ENCODE measurements at regions of chr18 and their contacts with region 1.

Region 1: DNA sequence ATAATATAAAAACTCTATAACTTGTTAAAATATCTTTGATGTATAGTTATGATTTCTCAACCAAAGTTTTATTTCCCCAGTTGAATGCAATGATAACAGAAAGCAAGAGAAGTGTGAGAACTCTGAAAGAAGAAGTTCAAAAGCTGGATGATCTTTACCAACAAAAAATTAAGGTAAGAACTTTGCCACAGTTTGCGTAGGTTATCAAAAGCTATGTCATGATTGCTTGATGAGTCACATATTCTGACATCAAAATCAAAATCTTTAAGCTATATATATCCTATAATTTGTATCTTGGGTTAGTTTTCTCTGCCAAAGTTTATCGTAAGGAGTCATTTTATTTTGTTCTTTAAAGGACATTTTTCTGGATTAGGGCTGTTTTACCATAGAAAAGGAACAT is 35.0 kb downstream of the NDC80 start:
- DNase-seq: peak in 1 of 35 experiments; percentile 55
- ATAC-seq: peak in 2 of 4 experiments; percentile 33 to 79
- H3K4me3 ChIP-seq: no peak overlapping the region
- H3K4me3 Mint-ChIP-seq: peak overlapping the region; percentile 26 to 59 (median 32)
- H3K27ac ChIP-seq: peak overlapping the region; percentile 91
- H3K27ac Mint-ChIP-seq: peak overlapping the region; percentile 83 to 92
- H3K4me1 ChIP-seq: peaks cover 10 to 34% of the 10 kb centered on the region in 2 experiments
- H3K4me1 Mint-ChIP-seq: peaks cover 55 to 62% (median 56%) of the 10 kb centered on the region in 3 donors
- H3K27me3 ChIP-seq: no peaks in the 10 kb centered on the region
- H3K27me3 Mint-ChIP-seq: no peaks in the 10 kb centered on the region

Region 2: GRCh38 chr18:2555895-2556294 is 50.4 kb before region 1 on chr18:
- CTCF ChIA-PET with region 1: no interaction called
- POLR2A ChIA-PET with region 1: no interaction called
- DNase-seq: no peak
- ATAC-seq: no peak
- H3K4me3 ChIP-seq: no peak overlapping the region
- H3K4me3 Mint-ChIP-seq: no peak overlapping the region
- H3K27ac ChIP-seq: no peak overlapping the region
- H3K27ac Mint-ChIP-seq: peak overlapping the region in 1 of 2 donors; percentile 12
- H3K4me1 ChIP-seq: no peaks in the 10 kb centered on the region
- H3K4me1 Mint-ChIP-seq: peaks cover 12 to 28% (median 17%) of the 10 kb centered on the region in 3 donors
- H3K27me3 ChIP-seq: no peaks in the 10 kb centered on the region
- H3K27me3 Mint-ChIP-seq: no peaks in the 10 kb centered on the region

Region 3: GRCh38 chr18:2571200-2572143 is 34.9 kb before region 1 on chr18 and contains the starts of genes METTL4 and NDC80:
- CTCF ChIA-PET with region 1: interaction called, 3 to 5 read pairs
- POLR2A ChIA-PET with region 1: interaction called in 1 of 2 experiments, 11 read pairs
- DNase-seq: peak; percentile 62 to 93 (median 78)
- ATAC-seq: peak; percentile 81 to 88 (median 86)
- H3K4me3 ChIP-seq: peak within 1 kb of the TSS; percentile 79 to 93
- H3K4me3 Mint-ChIP-seq: peak within 1 kb of the TSS; percentile 98 to 100 (median 99)
- H3K27ac ChIP-seq: peak within 1 kb of the TSS; percentile 98
- H3K27ac Mint-ChIP-seq: peak within 1 kb of the TSS; percentile 99 to 100
- H3K4me1 ChIP-seq: peaks cover 21 to 23% of the 10 kb centered on the region in 2 experiments
- H3K4me1 Mint-ChIP-seq: peaks cover 58 to 70% (median 69%) of the 10 kb centered on the region in 3 donors
- H3K27me3 ChIP-seq: no peaks in the 10 kb centered on the region
- H3K27me3 Mint-ChIP-seq: no peaks in the 10 kb centered on the region
- total RNA-seq, gene METTL4: 15.1 to 27.7 (median 21.4) TPM
- total RNA-seq, gene NDC80: 2.3 to 8.2 (median 3.3) TPM

Region 4: GRCh38 chr18:2641638-2642037 is 35.3 kb after region 1 on chr18:
- CTCF ChIA-PET with region 1: interaction called in 1 of 2 experiments, 37 read pairs
- POLR2A ChIA-PET with region 1: interaction called, 15 to 60 read pairs
- DNase-seq: peak in 1 of 35 experiments; percentile 76
- ATAC-seq: peak in 3 of 4 experiments; percentile 34 to 49 (median 44)
- H3K4me3 ChIP-seq: peak overlapping the region in 1 of 2 donors; percentile 25
- H3K4me3 Mint-ChIP-seq: peak overlapping the region; percentile 61 to 84 (median 71)
- H3K27ac ChIP-seq: peak overlapping the region; percentile 100
- H3K27ac Mint-ChIP-seq: no peak overlapping the region
- H3K4me1 ChIP-seq: peaks cover 61 to 65% of the 10 kb centered on the region in 2 experiments
- H3K4me1 Mint-ChIP-seq: peaks cover 52 to 54% (median 53%) of the 10 kb centered on the region in 3 donors
- H3K27me3 ChIP-seq: no peaks in the 10 kb centered on the region
- H3K27me3 Mint-ChIP-seq: no peaks in the 10 kb centered on the region

Region 5: DNA sequence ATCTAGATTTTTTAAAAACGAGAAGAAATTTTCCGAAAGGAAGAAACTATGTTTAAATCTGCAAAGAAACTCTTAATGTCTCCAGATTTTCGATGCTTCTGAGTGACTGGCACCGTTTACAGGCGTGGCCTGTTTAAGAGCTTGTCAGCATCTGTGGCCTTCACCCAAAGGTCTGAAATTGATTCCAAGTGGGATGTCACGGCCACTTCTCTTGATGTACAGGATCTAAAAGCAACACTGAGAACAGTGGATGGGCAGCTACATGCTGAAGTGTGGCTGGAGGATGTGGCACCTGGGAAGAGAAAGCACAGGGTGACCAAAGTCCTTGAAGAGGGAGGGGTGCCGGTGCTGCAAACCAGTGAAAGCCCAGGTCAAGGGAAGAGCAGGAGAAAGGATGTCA is 268.4 kb after region 1 on chr18:
- CTCF ChIA-PET with region 1: no interaction called
- POLR2A ChIA-PET with region 1: no interaction called
- DNase-seq: no peak
- ATAC-seq: no peak
- H3K4me3 ChIP-seq: no peak overlapping the region
- H3K4me3 Mint-ChIP-seq: no peak overlapping the region
- H3K27ac ChIP-seq: no peak overlapping the region
- H3K27ac Mint-ChIP-seq: no peak overlapping the region
- H3K4me1 ChIP-seq: no peaks in the 10 kb centered on the region
- H3K4me1 Mint-ChIP-seq: peaks cover 0 to 14% (median 6%) of the 10 kb centered on the region in 3 donors
- H3K27me3 ChIP-seq: peaks cover 0 to 5% of the 10 kb centered on the region in 2 experiments
- H3K27me3 Mint-ChIP-seq: no peaks in the 10 kb centered on the region